ENCODE measurements at regions of chr3 and their contacts with region 1.

Region 1: GRCh38 chr3:137360531-137361201 is 402.9 kb downstream of the IL20RB start:
- DNase-seq: no peak
- ATAC-seq: no peak
- H3K4me3 ChIP-seq: no peak overlapping the region
- H3K27ac ChIP-seq: no peak overlapping the region
- H3K4me1 ChIP-seq: no peaks in the 10 kb centered on the region
- H3K27me3 ChIP-seq: no peaks in the 10 kb centered on the region
- CTCF ChIP-seq: no peak
- EP300 ChIP-seq: no peak
- POLR2A ChIP-seq: no peak
- RAD21 ChIP-seq: no peak

Region 2: DNA sequence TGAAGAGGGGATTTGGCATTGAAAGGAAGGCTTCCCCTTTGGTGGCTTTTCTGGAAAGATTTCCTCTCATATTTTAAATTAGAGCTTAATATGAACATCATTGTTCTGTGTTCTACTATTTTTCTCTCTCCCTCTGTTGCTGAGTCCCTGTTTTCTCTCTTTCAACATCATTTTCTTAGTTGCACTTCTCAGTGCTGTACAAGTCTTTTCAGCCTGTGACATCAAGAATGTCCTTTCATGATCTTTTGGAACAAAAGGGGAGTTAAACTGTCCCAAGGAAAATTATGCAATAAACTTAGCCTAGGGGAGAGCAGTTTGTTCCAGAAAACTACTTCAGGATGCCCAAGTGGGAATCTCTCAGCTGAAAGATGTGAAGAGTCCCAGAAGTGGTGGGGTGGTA is 77.8 kb before region 1 on chr3:
- CTCF ChIA-PET with region 1: no interaction called
- POLR2A ChIA-PET with region 1: no interaction called
- RAD21 ChIA-PET with region 1: no interaction called
- SMC1A ChIA-PET with region 1: no interaction called
- in situ Hi-C with region 1: no loop called
- intact Hi-C with region 1: no loop called
- DNase-seq: no peak
- ATAC-seq: no peak
- H3K4me3 ChIP-seq: no peak overlapping the region
- H3K27ac ChIP-seq: no peak overlapping the region
- H3K4me1 ChIP-seq: no peaks in the 10 kb centered on the region
- H3K27me3 ChIP-seq: no peaks in the 10 kb centered on the region; a peak in 1 of 4 replicates
- CTCF ChIP-seq: no peak
- EP300 ChIP-seq: no peak
- POLR2A ChIP-seq: no peak
- RAD21 ChIP-seq: no peak

Region 3: GRCh38 chr3:137382005-137382594 is 21.4 kb after region 1 on chr3:
- CTCF ChIA-PET with region 1: interaction called, 3 read pairs
- POLR2A ChIA-PET with region 1: interaction called, 10 read pairs
- RAD21 ChIA-PET with region 1: no interaction called
- SMC1A ChIA-PET with region 1: no interaction called
- in situ Hi-C with region 1: no loop called
- intact Hi-C with region 1: no loop called
- DNase-seq: no peak
- ATAC-seq: no peak
- H3K4me3 ChIP-seq: no peak overlapping the region
- H3K27ac ChIP-seq: no peak overlapping the region
- H3K4me1 ChIP-seq: no peaks in the 10 kb centered on the region
- H3K27me3 ChIP-seq: no peaks in the 10 kb centered on the region
- CTCF ChIP-seq: no peak
- EP300 ChIP-seq: no peak
- POLR2A ChIP-seq: no peak
- RAD21 ChIP-seq: no peak

Region 4: GRCh38 chr3:137724240-137724639 is 363.6 kb after region 1 on chr3:
- CTCF ChIA-PET with region 1: no interaction called
- POLR2A ChIA-PET with region 1: no interaction called
- RAD21 ChIA-PET with region 1: no interaction called
- SMC1A ChIA-PET with region 1: no interaction called
- in situ Hi-C with region 1: no loop called
- intact Hi-C with region 1: no loop called
- DNase-seq: no peak
- ATAC-seq: no peak
- H3K4me3 ChIP-seq: no peak overlapping the region
- H3K27ac ChIP-seq: no peak overlapping the region
- H3K4me1 ChIP-seq: no peaks in the 10 kb centered on the region
- H3K27me3 ChIP-seq: no peaks in the 10 kb centered on the region; a peak in 1 of 4 replicates
- CTCF ChIP-seq: no peak
- EP300 ChIP-seq: no peak
- POLR2A ChIP-seq: no peak
- RAD21 ChIP-seq: no peak